Activated CD4-positive, alpha-beta T cell treated with anti-CD3 and anti-CD28 coated beads for 36 hours (primary cell): ENCODE measurements at regions of chr3 and their contacts with region 1.

Region 1: GRCh38 chr3:152193673-152194267 is 75.0 kb upstream of the MBNL1 start:
- DNase-seq: peak; percentile 46
- ATAC-seq: peak; percentile 49
- H3K4me3 Mint-ChIP-seq: peak overlapping the region; percentile 66
- H3K27ac Mint-ChIP-seq: peak overlapping the region; percentile 74
- H3K4me1 Mint-ChIP-seq: peaks cover 83% of the 10 kb centered on the region
- H3K27me3 Mint-ChIP-seq: no peaks in the 10 kb centered on the region

Region 2: GRCh38 chr3:152071924-152072323 is 121.8 kb before region 1 on chr3:
- CTCF ChIA-PET with region 1: interaction called, 3 read pairs
- POLR2A ChIA-PET with region 1: no interaction called
- intact Hi-C with region 1: loop called in 1 of 2 experiments (anchors 5 kb)
- DNase-seq: peak; percentile 14
- ATAC-seq: peak; percentile 87
- H3K4me3 Mint-ChIP-seq: no peak overlapping the region
- H3K27ac Mint-ChIP-seq: no peak overlapping the region
- H3K4me1 Mint-ChIP-seq: peaks cover 2% of the 10 kb centered on the region
- H3K27me3 Mint-ChIP-seq: no peaks in the 10 kb centered on the region

Region 3: DNA sequence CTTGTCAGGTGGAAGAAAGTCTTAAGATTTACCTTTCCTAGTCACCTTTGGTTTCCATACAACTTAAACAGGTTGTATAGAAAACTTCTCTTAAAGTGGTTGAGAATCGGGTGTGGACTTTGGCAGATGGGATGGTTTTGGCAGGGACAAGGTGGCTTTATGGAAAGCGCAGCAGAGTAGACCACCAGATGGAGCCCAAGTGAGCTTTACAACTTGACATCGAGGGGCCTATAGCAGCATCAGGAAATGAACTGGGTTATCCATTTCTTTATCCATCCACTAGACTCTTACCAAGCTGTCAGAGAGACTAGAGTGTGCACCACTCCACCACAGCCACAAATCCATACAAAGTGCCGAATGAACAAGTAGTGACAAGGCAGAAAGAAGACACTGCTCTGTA is 10.3 kb before region 1 on chr3:
- CTCF ChIA-PET with region 1: interaction called, 17 read pairs
- POLR2A ChIA-PET with region 1: interaction called, 4 read pairs
- intact Hi-C with region 1: no loop called
- DNase-seq: peak; percentile 72
- ATAC-seq: peak; percentile 87
- H3K4me3 Mint-ChIP-seq: peak overlapping the region; percentile 6
- H3K27ac Mint-ChIP-seq: peak overlapping the region; percentile 71
- H3K4me1 Mint-ChIP-seq: peaks cover 67% of the 10 kb centered on the region
- H3K27me3 Mint-ChIP-seq: no peaks in the 10 kb centered on the region

Region 4: DNA sequence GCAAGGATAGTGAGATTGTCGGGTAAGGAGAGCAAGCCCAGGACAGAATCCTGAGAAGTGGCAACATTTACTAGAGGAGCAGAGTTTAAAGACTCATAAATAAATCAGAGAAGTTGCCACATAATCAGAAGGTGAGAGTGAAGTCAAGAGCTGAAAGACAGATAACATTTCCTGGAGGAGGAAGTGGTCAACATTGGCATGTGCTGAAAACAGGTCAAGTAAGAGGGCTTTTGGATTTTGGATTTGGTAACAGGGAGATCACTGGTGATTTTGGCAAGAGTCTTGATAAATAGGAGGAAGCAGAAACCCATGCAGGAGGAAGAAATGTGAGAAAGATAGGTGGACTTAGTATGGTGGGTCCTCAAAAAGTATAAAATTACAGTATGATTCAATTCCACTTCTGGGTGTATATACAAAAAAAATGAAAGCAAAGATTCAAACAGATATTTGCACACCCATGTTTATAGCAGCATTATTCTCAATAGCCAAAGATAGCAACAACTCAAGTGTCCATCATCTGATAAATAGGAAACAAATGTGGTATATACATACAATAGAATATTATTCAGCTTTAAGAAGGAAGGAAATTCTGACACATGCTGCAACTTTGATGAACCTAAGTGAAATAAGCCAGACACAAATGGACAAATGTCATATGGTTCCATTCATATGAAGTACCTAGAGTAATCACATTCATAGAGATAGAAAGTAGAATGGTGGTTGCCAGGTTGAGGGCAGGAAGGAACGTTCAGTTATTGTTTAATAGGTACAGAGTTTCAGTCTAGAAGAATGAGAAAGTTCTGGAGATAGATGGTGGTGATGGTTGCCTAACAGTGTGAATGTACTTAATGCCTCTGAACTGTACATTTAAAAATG is 47.6 kb after region 1 on chr3:
- CTCF ChIA-PET with region 1: interaction called, 11 read pairs
- POLR2A ChIA-PET with region 1: no interaction called
- intact Hi-C with region 1: loop called (anchors 2 kb)
- DNase-seq: no peak
- ATAC-seq: peak; percentile 50
- H3K4me3 Mint-ChIP-seq: peak overlapping the region; percentile 88
- H3K27ac Mint-ChIP-seq: peak overlapping the region; percentile 95
- H3K4me1 Mint-ChIP-seq: peaks cover 61% of the 10 kb centered on the region
- H3K27me3 Mint-ChIP-seq: no peaks in the 10 kb centered on the region

Region 5: GRCh38 chr3:152405915-152406802 is 212.4 kb after region 1 on chr3:
- CTCF ChIA-PET with region 1: no interaction called
- POLR2A ChIA-PET with region 1: no interaction called
- intact Hi-C with region 1: loop called in 1 of 2 experiments (anchors 5 kb)
- DNase-seq: no peak
- ATAC-seq: no peak
- H3K4me3 Mint-ChIP-seq: no peak overlapping the region
- H3K27ac Mint-ChIP-seq: peak overlapping the region; percentile 1
- H3K4me1 Mint-ChIP-seq: peaks cover 74% of the 10 kb centered on the region
- H3K27me3 Mint-ChIP-seq: no peaks in the 10 kb centered on the region